Pancreas (tissue), 10 donors: ENCODE measurements at regions of chr2 and their contacts with region 1.

Region 1: GRCh38 chr2:121095257-121096080 is 189.5 kb downstream of the TFCP2L1 start:
- DNase-seq: peak; percentile 62 to 89 (median 78)
- ATAC-seq: peak; percentile 90 to 95 (median 91)
- H3K4me3 ChIP-seq: no peak overlapping the region
- H3K27ac ChIP-seq: no peak overlapping the region
- H3K4me1 ChIP-seq: no peaks in the 10 kb centered on the region
- H3K27me3 ChIP-seq: no peaks in the 10 kb centered on the region
- CTCF ChIP-seq: peak; percentile 53 to 67 (median 62)

Region 2: DNA sequence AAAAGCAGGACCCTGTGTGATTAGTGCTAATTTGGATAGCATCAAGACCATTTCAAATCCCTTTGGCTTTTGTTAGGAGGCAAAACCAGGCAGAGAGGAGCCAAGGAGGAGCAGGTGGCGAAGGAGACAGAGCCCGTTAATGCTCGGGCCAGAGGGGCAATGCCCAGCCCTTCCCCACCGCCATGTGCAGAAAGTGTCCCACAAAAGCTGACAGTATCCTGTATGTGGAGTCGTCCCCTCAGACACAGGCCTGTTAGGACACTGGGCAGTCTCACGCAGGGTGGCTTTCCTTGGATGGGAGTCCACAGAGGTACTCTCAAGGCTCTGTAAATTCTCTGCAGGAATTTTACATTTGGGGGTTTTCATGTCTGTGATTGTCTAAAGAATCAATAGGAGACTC is 234.3 kb after region 1 on chr2:
- intact Hi-C with region 1: loop called in 1 of 3 experiments (anchors 10 kb)
- DNase-seq: peak in 1 of 6 donors; percentile 5
- ATAC-seq: no peak
- H3K4me3 ChIP-seq: no peak overlapping the region
- H3K27ac ChIP-seq: no peak overlapping the region
- H3K4me1 ChIP-seq: no peaks in the 10 kb centered on the region
- H3K27me3 ChIP-seq: no peaks in the 10 kb centered on the region
- CTCF ChIP-seq: no peak

Region 3: GRCh38 chr2:121349721-121350401 is 254.4 kb after region 1 on chr2:
- intact Hi-C with region 1: loop called in 2 of 3 experiments (anchors 5 to 10 kb)
- DNase-seq: no peak
- ATAC-seq: no peak
- H3K4me3 ChIP-seq: no peak overlapping the region
- H3K27ac ChIP-seq: no peak overlapping the region
- H3K4me1 ChIP-seq: no peaks in the 10 kb centered on the region
- H3K27me3 ChIP-seq: no peaks in the 10 kb centered on the region
- CTCF ChIP-seq: no peak

Region 4: GRCh38 chr2:121356058-121356640 is 260.7 kb after region 1 on chr2:
- intact Hi-C with region 1: loop called in 2 of 3 experiments (anchors 5 to 10 kb)
- DNase-seq: peak in 2 of 6 donors; percentile 32 to 58
- ATAC-seq: peak; percentile 66 to 86 (median 80)
- H3K4me3 ChIP-seq: no peak overlapping the region
- H3K27ac ChIP-seq: no peak overlapping the region
- H3K4me1 ChIP-seq: peaks cover 0 to 19% (median 0%) of the 10 kb centered on the region in 3 donors
- H3K27me3 ChIP-seq: no peaks in the 10 kb centered on the region
- CTCF ChIP-seq: peak; percentile 26 to 55 (median 47)